A549 (cell line): ENCODE measurements at regions of chr2 and their contacts with region 1.

Region 1: GRCh38 chr2:121071034-121071504 is 213.9 kb downstream of the TFCP2L1 start:
- DNase-seq: peak; percentile 53 to 84
- ATAC-seq: peak; percentile 52 to 80
- H3K4me3 ChIP-seq: no peak overlapping the region
- H3K27ac ChIP-seq: peak overlapping the region; percentile 79 to 92
- H3K4me1 ChIP-seq: peaks cover 36% of the 10 kb centered on the region
- CTCF ChIP-seq: peak; percentile 97
- EP300 ChIP-seq: no peak
- POLR2A ChIP-seq: no peak
- RAD21 ChIP-seq: peak; percentile 95 to 98

Region 2: DNA sequence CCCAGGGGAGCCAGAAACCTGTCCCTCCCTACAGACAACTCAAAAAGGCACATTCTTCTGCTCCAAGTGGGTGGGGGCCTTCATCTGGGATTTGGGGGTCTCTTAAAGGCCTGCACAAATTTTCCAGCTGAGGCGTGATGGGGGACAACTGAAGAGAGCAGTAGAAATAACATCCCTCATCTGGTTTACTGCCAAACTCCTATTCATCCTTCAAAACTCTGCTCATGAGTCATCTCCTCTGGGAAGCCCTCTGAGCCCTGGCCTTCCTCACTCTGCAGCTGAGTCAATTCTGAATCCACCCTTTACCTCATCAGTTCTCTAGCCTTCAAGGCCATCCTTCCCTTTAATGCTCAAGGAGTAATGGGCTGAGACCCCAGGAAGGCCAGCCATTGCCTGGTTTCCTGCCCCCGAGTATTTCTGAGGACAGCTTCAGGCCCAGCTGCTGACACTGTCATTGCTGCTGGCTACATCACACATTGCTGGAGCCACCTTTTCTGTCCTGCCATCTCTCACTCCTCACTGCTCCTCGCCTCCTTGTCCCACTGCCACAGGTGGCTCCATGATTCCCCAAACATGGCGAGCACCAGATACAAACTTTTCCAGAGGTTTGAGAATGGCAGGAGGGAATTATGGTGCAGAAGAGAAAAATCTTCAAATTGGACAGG is 367.6 kb before region 1 on chr2:
- CTCF ChIA-PET with region 1: interaction called, 858 read pairs
- POLR2A ChIA-PET with region 1: no interaction called
- DNase-seq: peak in 1 of 2 experiments; percentile 45
- ATAC-seq: peak; percentile 72 to 76
- H3K4me3 ChIP-seq: no peak overlapping the region
- H3K27ac ChIP-seq: peak overlapping the region in 1 of 2 experiments; percentile 62; a peak in 5 of 6 replicates
- H3K4me1 ChIP-seq: peaks cover 23% of the 10 kb centered on the region
- CTCF ChIP-seq: no peak
- EP300 ChIP-seq: no peak
- POLR2A ChIP-seq: no peak
- RAD21 ChIP-seq: no peak

Region 3: DNA sequence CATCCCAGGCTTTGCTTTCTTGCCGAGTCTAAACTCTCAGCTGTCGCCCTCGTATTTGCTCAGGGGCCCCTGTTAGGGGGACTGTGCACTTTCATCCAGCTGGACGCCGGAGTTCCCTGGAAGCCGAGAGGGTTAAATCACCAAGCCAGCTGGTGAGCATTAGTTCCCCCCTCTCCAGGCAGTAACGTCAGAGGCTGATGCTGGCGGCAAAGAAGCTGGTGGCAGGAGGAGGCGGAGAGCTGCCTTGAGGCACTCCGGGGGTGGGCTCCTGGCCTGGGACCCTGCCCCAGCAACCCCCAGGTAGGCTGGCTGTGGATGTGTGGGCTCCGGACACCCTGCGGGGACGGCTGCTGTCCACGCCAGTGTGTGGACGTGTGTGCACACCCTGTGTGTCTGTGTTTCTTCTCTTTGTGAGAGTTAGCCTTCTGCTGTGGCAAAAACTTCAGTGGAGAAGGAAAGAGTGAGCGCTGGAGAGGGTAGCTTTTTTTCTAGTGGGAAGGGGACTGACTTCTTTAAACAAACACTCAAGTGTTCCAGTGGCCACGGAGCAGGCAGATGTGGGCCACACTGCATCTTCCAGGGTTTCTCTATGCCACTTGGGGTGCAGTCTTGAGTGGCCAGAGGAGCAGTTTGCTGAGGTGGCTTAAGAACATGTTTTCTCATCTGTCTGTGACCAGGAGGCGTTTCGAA is 250.7 kb before region 1 on chr2:
- CTCF ChIA-PET with region 1: interaction called, 10 read pairs
- POLR2A ChIA-PET with region 1: interaction called, 3 read pairs
- DNase-seq: no peak
- ATAC-seq: no peak
- H3K4me3 ChIP-seq: no peak overlapping the region
- H3K27ac ChIP-seq: peak overlapping the region in 1 of 2 experiments; percentile 84; a peak in 2 of 6 replicates
- H3K4me1 ChIP-seq: peaks cover 28% of the 10 kb centered on the region
- CTCF ChIP-seq: no peak
- EP300 ChIP-seq: no peak
- POLR2A ChIP-seq: no peak
- RAD21 ChIP-seq: no peak

Region 4: GRCh38 chr2:120934574-120935340 is 136.3 kb before region 1 on chr2:
- CTCF ChIA-PET with region 1: interaction called, 23 read pairs
- POLR2A ChIA-PET with region 1: interaction called, 30 read pairs
- DNase-seq: peak; percentile 97 to 99
- ATAC-seq: peak; percentile 67 to 77
- H3K4me3 ChIP-seq: peak overlapping the region; percentile 21
- H3K27ac ChIP-seq: peak overlapping the region; percentile 97 to 98
- H3K4me1 ChIP-seq: peaks cover 77% of the 10 kb centered on the region
- CTCF ChIP-seq: no peak
- EP300 ChIP-seq: peak; percentile 98
- POLR2A ChIP-seq: no peak
- RAD21 ChIP-seq: peak in 1 of 2 experiments; percentile 51; a peak in 3 of 5 replicates

Region 5: GRCh38 chr2:121044412-121044811 is 26.7 kb before region 1 on chr2:
- CTCF ChIA-PET with region 1: interaction called, 22 read pairs
- POLR2A ChIA-PET with region 1: no interaction called
- DNase-seq: peak in 1 of 2 experiments; percentile 25
- ATAC-seq: peak; percentile 36 to 74; a peak in 3 of 6 replicates
- H3K4me3 ChIP-seq: no peak overlapping the region
- H3K27ac ChIP-seq: no peak overlapping the region
- H3K4me1 ChIP-seq: no peaks in the 10 kb centered on the region
- CTCF ChIP-seq: no peak
- EP300 ChIP-seq: no peak
- POLR2A ChIP-seq: no peak
- RAD21 ChIP-seq: peak in 1 of 2 experiments; percentile 14; a peak in 2 of 5 replicates

Region 6: GRCh38 chr2:121085801-121086200 is 14.7 kb after region 1 on chr2:
- CTCF ChIA-PET with region 1: interaction called, 311 read pairs
- POLR2A ChIA-PET with region 1: no interaction called
- DNase-seq: no peak
- ATAC-seq: no peak
- H3K4me3 ChIP-seq: no peak overlapping the region
- H3K27ac ChIP-seq: no peak overlapping the region
- H3K4me1 ChIP-seq: no peaks in the 10 kb centered on the region
- CTCF ChIP-seq: no peak
- EP300 ChIP-seq: no peak
- POLR2A ChIP-seq: no peak
- RAD21 ChIP-seq: no peak